ENCODE measurements at regions of chr18 and their contacts with region 1.

Region 1: DNA sequence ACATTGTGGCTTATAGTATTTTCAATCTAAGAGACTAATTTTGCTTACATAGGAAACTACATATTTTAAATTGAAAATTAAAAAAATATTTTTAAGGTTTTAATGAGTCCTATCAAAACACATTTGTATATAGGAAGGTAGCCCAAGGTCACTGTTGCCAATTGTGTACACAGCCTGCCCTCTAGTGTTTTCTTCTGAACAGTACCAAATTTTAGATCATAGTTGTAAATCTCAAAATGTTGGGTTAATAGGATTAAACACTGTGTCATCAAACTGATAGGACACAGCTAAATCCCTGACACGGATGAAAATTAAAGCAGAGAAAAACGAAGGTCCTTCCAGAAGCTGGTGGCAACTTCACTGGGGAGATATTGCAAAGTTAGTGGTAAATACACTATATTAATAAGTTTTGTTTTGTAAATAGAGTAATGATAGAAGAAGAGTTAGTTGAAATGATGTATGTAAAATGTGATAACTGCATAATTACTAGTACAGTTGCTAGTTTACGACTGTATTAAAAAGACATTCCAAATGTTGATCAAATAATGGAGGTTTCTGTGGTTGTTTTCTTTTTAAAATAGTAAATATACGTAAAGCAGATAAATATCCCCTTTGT is 19.7 kb downstream of the CLUL1 start:
- DNase-seq: no peak
- H3K4me3 ChIP-seq: no peak overlapping the region
- H3K27ac ChIP-seq: no peak overlapping the region
- H3K4me1 ChIP-seq: no peaks in the 10 kb centered on the region
- H3K27me3 ChIP-seq: no peaks in the 10 kb centered on the region
- CTCF ChIP-seq: peak; percentile 38

Region 2: DNA sequence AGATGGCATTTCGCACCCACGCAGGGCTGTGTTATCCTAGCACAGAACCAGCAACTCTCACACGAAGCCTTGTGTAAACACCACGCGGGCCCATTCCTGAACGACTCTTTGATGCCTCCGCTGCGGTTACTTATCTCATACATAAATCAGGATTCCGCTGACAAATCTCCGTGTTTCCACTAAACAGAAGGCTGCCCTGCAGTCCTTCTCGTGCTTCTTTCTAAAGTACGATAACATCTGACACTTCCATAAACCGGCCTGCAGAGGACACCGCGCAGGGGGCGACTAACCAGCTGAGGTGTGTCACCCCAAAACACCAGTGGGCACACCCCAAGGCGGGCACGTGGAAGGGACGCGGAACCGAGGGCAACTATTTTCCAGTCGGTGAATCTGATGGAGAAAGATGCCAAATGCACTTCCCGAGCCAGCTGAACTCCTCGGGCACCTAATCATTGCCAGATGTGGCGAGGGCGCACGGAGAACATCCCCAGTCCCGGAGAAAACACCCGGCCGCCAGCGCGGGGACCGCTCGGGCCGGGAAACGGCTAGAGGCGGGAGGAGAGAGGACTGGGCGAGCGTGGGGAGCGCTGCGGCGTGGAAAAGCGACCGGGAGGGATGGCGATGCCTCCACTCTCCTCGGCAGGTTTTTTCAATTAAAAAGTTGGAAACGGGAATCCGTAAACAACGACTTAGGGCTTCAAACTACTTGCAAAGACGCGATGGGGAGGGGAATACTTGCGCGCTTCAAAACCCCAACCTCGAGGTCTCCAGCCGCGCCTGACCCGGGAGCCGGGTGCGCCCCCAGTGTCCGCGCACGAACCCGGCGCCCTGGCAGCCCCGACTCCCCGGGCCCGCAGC is 116.7 kb before region 1 on chr18:
- intact Hi-C with region 1: loop called (anchors 10 kb)
- DNase-seq: no peak
- H3K4me3 ChIP-seq: peak overlapping the region; percentile 35
- H3K27ac ChIP-seq: no peak overlapping the region
- H3K4me1 ChIP-seq: no peaks in the 10 kb centered on the region
- H3K27me3 ChIP-seq: peaks cover 26% of the 10 kb centered on the region
- CTCF ChIP-seq: no peak

Region 3: DNA sequence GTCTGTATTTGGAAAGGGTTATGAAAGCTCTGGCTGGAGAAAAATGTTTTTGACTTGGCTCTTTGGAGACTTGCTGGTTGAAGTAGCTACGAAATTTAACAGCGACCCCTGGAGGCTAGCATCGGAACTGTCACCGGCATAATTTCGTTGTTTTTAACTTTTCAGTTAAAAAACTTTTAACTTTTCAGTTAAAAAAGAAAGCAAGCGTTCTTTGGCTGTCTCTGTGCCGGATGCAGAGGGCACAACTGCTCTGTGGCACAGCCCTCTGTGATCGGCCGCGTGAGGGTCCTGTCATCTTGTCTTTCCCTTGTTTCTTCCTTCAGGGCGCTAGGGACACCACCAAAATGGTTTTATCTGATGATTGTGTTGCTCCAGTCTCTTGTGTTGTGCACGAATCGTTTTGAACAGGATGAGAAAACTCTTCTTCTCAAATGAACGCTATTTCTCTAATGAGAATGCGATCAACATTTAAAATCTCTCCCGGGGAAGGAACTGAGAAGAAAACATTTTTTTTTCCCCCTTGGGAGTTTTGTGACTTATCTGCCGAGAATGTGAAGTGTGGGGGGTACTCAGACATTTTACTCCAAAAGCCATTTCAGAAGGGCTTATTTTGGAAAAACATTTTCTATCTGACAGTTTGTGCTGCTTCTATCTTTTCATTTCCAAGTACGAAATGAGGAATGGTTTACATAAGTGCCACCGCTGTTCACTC is 345.3 kb after region 1 on chr18:
- intact Hi-C with region 1: no loop called
- DNase-seq: peak; percentile 25
- H3K4me3 ChIP-seq: no peak overlapping the region
- H3K27ac ChIP-seq: no peak overlapping the region
- H3K4me1 ChIP-seq: no peaks in the 10 kb centered on the region
- H3K27me3 ChIP-seq: no peaks in the 10 kb centered on the region
- CTCF ChIP-seq: peak; percentile 94